ENCODE measurements at regions of chr6 and their contacts with region 1.

Region 1: DNA sequence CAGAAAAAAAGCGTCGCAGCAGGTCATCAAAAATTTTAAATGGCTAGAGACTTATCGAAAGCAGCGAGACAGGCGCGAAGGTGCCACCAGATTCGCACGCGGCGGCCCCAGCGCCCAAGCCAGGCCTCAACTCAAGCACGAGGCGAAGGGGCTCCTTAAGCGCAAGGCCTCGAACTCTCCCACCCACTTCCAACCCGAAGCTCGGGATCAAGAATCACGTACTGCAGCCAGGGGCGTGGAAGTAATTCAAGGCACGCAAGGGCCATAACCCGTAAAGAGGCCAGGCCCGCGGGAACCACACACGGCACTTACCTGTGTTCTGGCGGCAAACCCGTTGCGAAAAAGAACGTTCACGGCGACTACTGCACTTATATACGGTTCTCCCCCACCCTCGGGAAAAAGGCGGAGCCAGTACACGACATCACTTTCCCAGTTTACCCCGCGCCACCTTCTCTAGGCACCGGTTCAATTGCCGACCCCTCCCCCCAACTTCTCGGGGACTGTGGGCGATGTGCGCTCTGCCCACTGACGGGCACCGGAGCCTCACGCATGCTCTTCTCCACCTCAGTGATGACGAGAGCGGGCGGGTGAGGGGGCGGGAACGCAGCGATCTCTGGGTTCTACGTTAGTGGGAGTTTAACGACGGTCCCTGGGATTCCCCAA is at the start of gene EEF1A1:
- DNase-seq: peak; percentile 98 to 100 (median 100)
- ATAC-seq: peak; percentile 76 to 83 (median 80)
- H3K4me3 ChIP-seq: peak within 1 kb of the TSS; percentile 99 to 100
- H3K4me3 Mint-ChIP-seq: peak within 1 kb of the TSS; percentile 95 to 97 (median 96)
- H3K27ac ChIP-seq: peak within 1 kb of the TSS; percentile 100
- H3K27ac Mint-ChIP-seq: peak within 1 kb of the TSS; percentile 96 to 98
- H3K4me1 ChIP-seq: peaks cover 37 to 58% of the 10 kb centered on the region in 2 experiments
- H3K4me1 Mint-ChIP-seq: peaks cover 64 to 70% (median 64%) of the 10 kb centered on the region in 3 donors
- H3K27me3 ChIP-seq: no peaks in the 10 kb centered on the region
- H3K27me3 Mint-ChIP-seq: no peaks in the 10 kb centered on the region
- total RNA-seq, gene EEF1A1: 14,142 to 15,123 (median 14,655) TPM

Region 2: DNA sequence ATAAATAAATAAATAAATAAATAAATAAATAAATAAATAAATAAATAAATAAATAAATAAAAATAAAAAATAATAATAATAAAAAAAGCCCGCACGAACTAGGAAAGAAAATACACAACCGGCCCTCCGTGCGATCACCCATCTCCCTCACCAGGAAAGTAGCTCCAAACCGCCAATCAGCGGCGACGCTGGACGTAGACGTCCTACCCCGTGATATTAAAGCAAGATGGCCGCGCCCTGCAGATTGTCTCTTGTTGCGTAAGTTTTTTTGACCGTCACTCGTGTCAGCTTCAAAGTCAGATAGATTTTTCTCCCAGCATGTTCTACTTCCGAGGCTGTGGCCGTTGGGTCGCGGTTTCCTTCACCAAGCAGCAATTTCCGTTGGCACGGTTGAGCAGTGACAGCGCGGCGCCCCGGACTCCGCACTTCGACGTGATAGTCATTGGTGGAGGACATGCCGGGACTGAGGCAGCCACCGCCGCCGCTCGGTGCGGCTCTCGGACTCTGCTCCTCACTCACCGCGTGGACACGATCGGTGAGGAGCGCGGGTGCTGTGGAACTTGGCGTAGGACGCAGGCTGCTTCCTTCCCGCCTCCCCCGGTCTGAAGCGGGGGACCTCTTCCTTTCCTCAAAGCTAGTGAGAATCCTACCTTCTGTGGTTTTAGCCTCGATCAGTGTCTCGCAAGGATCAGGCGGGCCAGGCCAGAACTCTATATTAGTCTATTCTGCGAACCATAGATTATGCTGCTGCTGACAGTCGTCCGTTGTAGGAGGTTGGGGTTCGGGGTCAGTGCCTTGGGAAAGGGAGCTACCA is 59.1 kb before region 1 on chr6 and contains the start of gene MTO1:
- CTCF ChIA-PET with region 1: interaction called in 1 of 2 experiments, 7 read pairs
- POLR2A ChIA-PET with region 1: interaction called, 3 to 19 read pairs
- DNase-seq: peak; percentile 65 to 93 (median 85)
- ATAC-seq: peak; percentile 95 to 97 (median 96)
- H3K4me3 ChIP-seq: peak within 1 kb of the TSS; percentile 78 to 84
- H3K4me3 Mint-ChIP-seq: peak within 1 kb of the TSS; percentile 88 to 96 (median 93)
- H3K27ac ChIP-seq: peak within 1 kb of the TSS; percentile 93
- H3K27ac Mint-ChIP-seq: peak within 1 kb of the TSS; percentile 94 to 97
- H3K4me1 ChIP-seq: peaks cover 2 to 36% of the 10 kb centered on the region in 2 experiments
- H3K4me1 Mint-ChIP-seq: peaks cover 42 to 54% (median 43%) of the 10 kb centered on the region in 3 donors
- H3K27me3 ChIP-seq: no peaks in the 10 kb centered on the region
- H3K27me3 Mint-ChIP-seq: no peaks in the 10 kb centered on the region
- total RNA-seq, gene MTO1: 55.0 to 80.4 (median 59.3) TPM

Region 3: DNA sequence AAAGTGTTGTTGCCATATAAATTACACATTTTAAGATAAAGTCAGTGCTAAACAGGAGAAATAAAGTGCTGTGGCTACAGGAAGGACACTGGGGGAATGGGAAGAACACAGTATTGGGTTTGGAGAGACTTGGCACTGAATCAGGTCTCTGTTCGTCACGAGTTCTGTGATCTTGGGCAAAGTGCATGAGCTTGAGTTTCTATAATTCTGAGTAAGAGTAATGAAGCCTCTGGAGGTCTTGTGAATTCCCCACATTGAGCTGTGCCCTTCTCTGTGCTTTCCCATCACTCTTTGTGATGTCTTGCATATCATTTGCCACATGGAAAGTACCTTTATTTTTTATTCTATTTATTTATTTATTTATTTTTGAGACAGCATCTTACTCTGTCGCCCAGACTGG is 16.9 kb after region 1 on chr6:
- CTCF ChIA-PET with region 1: no interaction called
- POLR2A ChIA-PET with region 1: interaction called, 3 to 11 read pairs
- DNase-seq: no peak
- ATAC-seq: no peak
- H3K4me3 ChIP-seq: no peak overlapping the region
- H3K4me3 Mint-ChIP-seq: no peak overlapping the region
- H3K27ac ChIP-seq: no peak overlapping the region
- H3K27ac Mint-ChIP-seq: no peak overlapping the region
- H3K4me1 ChIP-seq: no peaks in the 10 kb centered on the region
- H3K4me1 Mint-ChIP-seq: no peaks in the 10 kb centered on the region
- H3K27me3 ChIP-seq: no peaks in the 10 kb centered on the region
- H3K27me3 Mint-ChIP-seq: no peaks in the 10 kb centered on the region

Region 4: DNA sequence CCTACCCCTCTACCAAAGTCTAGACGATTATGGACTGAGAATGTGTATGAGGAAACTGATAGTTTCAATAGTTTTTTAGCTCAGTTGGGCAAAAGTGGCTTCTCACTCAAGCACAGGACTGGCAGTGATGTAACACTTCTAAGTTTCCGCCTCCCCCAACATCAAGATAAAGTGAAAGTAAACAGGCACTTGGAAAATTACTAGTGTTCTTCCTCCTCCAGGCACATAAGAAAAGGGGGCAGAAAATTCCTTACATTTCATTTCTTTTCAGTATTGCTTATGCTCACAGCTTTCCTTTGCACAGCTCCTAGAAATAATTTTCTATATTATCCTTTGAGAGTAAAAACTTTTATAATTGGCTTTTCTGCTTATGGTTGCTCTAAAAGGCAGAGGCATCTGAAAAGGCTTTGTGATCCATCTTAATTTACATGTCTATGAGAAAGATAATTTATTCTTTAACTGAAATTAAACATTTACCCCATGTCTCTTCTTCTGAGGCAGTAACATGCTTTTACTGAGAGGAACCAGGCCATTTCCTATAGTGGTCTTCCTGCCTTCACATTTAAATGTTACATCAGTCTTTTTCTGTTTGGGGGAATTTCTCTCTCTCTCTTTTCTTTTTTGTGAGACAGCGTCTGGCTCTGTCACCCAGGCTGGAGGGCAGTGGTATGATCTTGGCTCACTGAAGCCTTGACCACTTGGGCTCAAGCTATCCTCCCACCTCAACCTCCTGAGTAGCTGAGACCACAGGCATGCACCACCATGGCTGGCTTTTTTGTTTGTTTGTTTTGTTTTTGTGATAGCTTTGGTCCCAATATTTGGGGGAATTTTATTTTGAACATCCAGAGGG is 65.0 kb after region 1 on chr6:
- CTCF ChIA-PET with region 1: interaction called in 1 of 2 experiments, 9 read pairs
- POLR2A ChIA-PET with region 1: interaction called, 10 to 30 read pairs
- DNase-seq: peak in 30 of 35 experiments; percentile 6 to 80 (median 22)
- ATAC-seq: peak; percentile 81 to 85 (median 82)
- H3K4me3 ChIP-seq: peak overlapping the region; percentile 6 to 19
- H3K4me3 Mint-ChIP-seq: peak overlapping the region; percentile 79 to 80 (median 79)
- H3K27ac ChIP-seq: peak overlapping the region; percentile 94
- H3K27ac Mint-ChIP-seq: peak overlapping the region; percentile 100
- H3K4me1 ChIP-seq: peaks cover 6 to 18% of the 10 kb centered on the region in 2 experiments
- H3K4me1 Mint-ChIP-seq: peaks cover 27 to 31% (median 28%) of the 10 kb centered on the region in 3 donors
- H3K27me3 ChIP-seq: no peaks in the 10 kb centered on the region
- H3K27me3 Mint-ChIP-seq: no peaks in the 10 kb centered on the region

Region 5: DNA sequence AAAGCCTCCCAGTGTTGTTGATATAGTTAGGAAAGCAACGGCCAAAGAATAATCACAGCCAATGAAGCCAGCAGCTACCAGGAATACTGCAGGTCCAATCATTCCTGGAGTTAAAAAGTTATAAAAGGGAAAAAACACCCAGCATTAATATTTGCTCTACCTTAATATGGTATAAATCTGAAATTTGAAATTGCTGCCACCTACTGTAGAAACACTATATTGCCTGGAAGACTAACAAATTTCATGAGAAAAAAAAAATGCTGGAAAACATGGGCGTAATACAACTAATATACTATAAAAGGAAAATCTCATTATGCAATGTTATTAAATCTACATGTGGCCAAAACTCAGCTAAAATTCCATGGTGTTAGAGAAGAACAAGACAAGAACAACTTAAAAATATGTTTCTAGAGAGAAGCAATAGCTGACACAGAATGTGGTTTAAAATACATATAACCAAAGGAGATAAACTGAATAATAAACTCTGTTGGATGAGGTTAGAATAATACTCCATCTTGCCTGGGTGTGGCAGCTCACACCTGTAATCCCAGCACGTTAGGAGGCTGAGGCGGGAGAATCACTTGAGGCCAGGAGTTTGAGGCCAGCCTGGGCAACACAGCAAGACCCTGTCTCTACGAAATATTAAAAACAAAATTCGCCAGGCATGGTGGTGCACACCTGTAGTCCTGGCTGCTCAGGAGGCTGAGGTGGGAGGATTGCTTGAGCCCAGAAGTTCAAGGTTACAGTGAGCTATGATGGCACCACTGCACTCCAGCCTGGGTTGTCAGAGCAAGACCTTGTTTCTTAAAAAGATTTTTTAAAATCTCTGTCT is 89.8 kb after region 1 on chr6:
- CTCF ChIA-PET with region 1: interaction called, 63 to 81 read pairs
- POLR2A ChIA-PET with region 1: interaction called, 5 to 6 read pairs
- DNase-seq: peak in 2 of 35 experiments; percentile 11 to 73
- ATAC-seq: peak; percentile 36 to 69 (median 48)
- H3K4me3 ChIP-seq: no peak overlapping the region
- H3K4me3 Mint-ChIP-seq: no peak overlapping the region
- H3K27ac ChIP-seq: no peak overlapping the region
- H3K27ac Mint-ChIP-seq: peak overlapping the region in 1 of 2 donors; percentile 53
- H3K4me1 ChIP-seq: no peaks in the 10 kb centered on the region
- H3K4me1 Mint-ChIP-seq: peaks cover 4 to 6% (median 4%) of the 10 kb centered on the region in 3 donors
- H3K27me3 ChIP-seq: no peaks in the 10 kb centered on the region
- H3K27me3 Mint-ChIP-seq: no peaks in the 10 kb centered on the region

Region 6: DNA sequence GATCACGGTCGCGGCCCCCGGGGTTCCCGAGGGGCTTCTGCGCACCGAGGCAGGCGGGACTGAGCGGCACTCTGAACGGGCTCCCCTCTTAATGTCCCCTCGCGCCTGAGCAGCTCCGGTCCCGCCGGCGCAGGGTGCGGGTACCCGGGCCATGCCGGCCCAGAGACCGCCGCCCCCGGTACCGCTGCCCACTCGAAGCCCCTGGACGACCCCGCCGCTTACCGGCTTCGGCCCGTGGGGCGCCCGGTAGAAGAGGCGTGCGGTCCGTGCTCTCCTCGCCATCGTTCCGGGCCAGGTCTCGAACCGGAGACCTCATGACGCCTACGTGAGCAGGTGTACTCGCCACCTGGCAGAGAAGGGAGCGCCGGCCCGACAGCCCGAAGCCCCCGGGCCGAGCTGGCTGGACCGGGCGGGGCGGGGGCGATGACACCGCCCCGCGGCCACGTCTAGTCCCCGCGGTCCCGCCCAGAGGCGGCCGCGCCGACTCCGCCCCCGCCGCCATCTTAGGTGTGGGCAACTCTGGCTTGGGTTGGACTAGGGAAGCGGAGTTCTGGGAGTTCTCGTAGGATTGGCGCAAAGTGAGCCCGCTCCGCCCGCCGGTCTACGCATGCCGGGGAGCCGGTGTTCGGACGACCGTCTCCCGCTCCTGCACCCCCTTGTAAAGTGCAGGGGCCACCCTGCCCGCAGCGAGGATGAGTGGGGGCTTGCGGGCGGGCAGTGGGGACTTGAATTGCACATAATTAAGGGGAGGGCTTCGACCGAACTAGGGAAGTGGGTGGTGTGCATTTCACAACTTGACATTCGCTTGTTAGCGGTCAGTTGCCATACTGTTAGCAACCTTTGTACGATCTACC is 133.0 kb after region 1 on chr6 and contains the start of gene SLC17A5:
- CTCF ChIA-PET with region 1: interaction called in 1 of 2 experiments, 24 read pairs
- POLR2A ChIA-PET with region 1: interaction called, 3 to 14 read pairs
- DNase-seq: peak; percentile 78 to 93 (median 86)
- ATAC-seq: peak; percentile 91 to 95 (median 92)
- H3K4me3 ChIP-seq: peak within 1 kb of the TSS; percentile 80 to 98
- H3K4me3 Mint-ChIP-seq: peak within 1 kb of the TSS; percentile 94 to 97 (median 96)
- H3K27ac ChIP-seq: peak within 1 kb of the TSS; percentile 98
- H3K27ac Mint-ChIP-seq: peak within 1 kb of the TSS; percentile 95 to 97
- H3K4me1 ChIP-seq: peaks cover 6 to 17% of the 10 kb centered on the region in 2 experiments
- H3K4me1 Mint-ChIP-seq: peaks cover 34 to 37% (median 34%) of the 10 kb centered on the region in 3 donors
- H3K27me3 ChIP-seq: no peaks in the 10 kb centered on the region
- H3K27me3 Mint-ChIP-seq: no peaks in the 10 kb centered on the region
- total RNA-seq, gene SLC17A5: 6.4 to 15.0 (median 9.4) TPM

Measured in T-cell (primary cell).